ENCODE measurements at regions of chr20 and their contacts with region 1.

Region 1: DNA sequence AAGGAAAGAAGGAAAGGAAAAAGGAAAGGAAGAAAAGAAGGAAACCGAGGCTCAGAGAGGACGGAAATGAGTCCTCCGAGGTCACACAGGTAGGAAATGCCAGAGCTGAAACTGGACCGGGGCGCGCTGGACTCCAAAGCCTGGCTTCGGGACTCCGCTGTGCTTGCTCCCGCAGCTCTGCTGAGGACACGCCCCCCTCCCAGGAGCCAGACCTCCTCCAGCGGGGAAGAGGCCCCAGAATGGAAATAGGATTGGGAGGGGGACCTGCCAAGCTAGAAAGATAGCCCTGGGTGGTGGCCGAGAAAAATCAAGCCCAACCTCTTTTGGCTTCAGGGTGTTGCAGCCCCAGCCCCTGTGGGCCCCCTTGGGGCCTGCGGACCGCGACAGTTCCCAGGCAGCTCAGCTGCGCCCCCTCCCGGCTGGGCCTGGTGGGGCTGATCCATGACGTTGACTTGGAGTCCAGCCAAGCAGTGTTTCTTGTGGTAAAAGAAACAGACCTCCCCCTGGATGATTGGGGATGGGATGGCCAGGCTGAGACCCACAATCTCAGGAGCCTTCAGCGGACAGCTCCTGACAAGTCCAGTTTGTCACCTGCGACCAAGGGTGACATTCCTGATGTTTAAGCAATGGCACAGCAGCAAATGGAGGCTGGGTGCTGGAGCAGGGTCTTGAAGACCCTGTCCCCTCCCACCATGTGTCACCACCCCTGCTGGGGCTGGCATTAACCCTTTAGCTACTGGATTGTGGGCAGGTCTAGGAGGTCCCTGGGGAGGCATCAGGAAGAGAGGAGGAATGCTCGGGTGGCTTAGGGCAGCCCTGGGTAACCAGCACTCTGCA is 55.5 kb downstream of the RIPOR3 start:
- DNase-seq: peak in 1 of 2 experiments; percentile 99
- H3K4me3 ChIP-seq: peak overlapping the region in 1 of 4 experiments; percentile 23; a peak in 1 of 8 replicates
- H3K27ac ChIP-seq: no peak overlapping the region
- H3K4me1 ChIP-seq: peaks cover 15 to 27% (median 18%) of the 10 kb centered on the region in 4 experiments
- H3K27me3 ChIP-seq: no peaks in the 10 kb centered on the region
- CTCF ChIP-seq: peak; percentile 91 to 97 (median 94)
- EP300 ChIP-seq: no peak
- POLR2A ChIP-seq: peak in 1 of 2 experiments; percentile 18; a peak in 1 of 3 replicates
- RAD21 ChIP-seq: peak; percentile 60 to 76

Region 2: DNA sequence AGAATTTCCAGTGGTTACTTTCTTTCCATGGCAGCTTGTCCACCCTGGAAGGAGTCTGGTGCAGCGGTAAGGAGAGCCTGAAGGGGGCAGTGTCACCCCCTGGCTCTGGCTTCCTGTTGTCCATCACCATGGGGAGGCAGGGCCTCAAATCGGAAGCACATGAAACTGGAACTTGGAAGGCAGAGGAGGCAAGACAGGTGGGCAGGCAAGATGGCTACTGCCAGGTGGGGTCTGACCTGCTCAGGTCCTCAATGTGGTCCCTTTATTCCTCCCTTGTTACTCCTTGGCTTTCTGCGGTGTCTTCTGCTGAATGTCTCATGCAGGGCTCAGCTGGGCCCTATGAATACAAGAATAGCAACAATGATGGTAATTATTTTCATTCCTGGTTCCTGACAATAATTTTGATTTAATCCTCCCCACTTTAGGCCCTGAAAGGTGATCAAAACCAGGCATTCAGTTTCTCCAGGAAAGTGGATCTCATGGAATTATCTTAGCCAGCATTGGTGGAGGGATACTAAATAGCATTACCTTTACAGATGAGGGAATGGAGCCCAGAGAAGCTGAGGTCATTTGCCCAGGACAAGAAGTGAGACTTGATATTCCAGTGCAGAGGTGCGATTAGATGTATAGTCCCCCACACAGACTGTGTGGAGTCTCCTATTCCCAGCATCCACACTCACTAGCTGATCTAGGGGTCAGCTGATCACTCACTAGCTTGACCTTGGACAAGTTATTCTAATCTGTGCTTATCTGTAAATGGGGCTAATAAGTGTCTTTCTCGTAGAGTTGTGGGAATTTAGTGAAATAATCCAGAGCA is 670.7 kb before region 1 on chr20:
- CTCF ChIA-PET with region 1: no interaction called
- POLR2A ChIA-PET with region 1: no interaction called
- DNase-seq: peak in 1 of 2 experiments; percentile 84
- H3K4me3 ChIP-seq: no peak overlapping the region
- H3K27ac ChIP-seq: no peak overlapping the region
- H3K4me1 ChIP-seq: peaks cover 0 to 2% (median under 1%) of the 10 kb centered on the region in 4 experiments; a peak in 2 of 7 replicates
- H3K27me3 ChIP-seq: no peaks in the 10 kb centered on the region
- CTCF ChIP-seq: peak; percentile 74 to 92 (median 88)
- EP300 ChIP-seq: no peak
- POLR2A ChIP-seq: no peak
- RAD21 ChIP-seq: peak; percentile 48 to 66

Region 3: DNA sequence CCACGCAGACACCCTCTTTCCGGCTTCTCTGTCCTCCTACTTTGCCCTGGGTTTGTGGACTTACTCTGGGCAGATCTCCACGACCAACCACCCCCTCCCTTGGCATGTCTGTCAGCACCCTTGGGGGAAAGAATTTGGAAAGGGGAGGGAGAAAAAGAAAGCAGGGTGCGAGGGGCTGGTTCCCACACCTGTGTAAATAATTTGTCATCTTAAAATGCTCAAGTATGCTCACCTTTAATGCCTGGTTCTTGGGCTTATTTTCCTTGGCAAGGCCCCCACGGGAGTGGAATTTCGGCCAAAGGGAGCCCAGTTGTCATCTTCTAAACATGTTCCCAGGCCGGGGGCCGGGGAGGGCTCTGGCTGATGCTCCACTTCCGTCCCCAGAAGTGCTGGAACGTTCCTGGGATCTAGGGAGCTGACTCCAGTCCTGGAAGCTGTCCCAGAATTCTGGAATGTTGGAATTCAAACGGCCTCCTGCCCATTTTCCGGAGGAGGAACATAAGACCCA is 323.1 kb before region 1 on chr20:
- CTCF ChIA-PET with region 1: no interaction called
- POLR2A ChIA-PET with region 1: no interaction called
- DNase-seq: no peak
- H3K4me3 ChIP-seq: no peak overlapping the region
- H3K27ac ChIP-seq: no peak overlapping the region
- H3K4me1 ChIP-seq: peaks cover 0 to 7% (median 3%) of the 10 kb centered on the region in 4 experiments; a peak in 4 of 7 replicates
- H3K27me3 ChIP-seq: no peaks in the 10 kb centered on the region
- CTCF ChIP-seq: no peak
- EP300 ChIP-seq: no peak
- POLR2A ChIP-seq: no peak
- RAD21 ChIP-seq: no peak

Region 4: GRCh38 chr20:50510706-50511542 is 125.0 kb before region 1 on chr20:
- CTCF ChIA-PET with region 1: no interaction called
- POLR2A ChIA-PET with region 1: no interaction called
- DNase-seq: no peak
- H3K4me3 ChIP-seq: peak overlapping the region; percentile 81 to 96 (median 89)
- H3K27ac ChIP-seq: peak overlapping the region; percentile 62
- H3K4me1 ChIP-seq: peaks cover 3 to 7% (median 5%) of the 10 kb centered on the region in 4 experiments
- H3K27me3 ChIP-seq: no peaks in the 10 kb centered on the region
- CTCF ChIP-seq: no peak
- EP300 ChIP-seq: no peak
- POLR2A ChIP-seq: no peak; a peak in 1 of 3 replicates
- RAD21 ChIP-seq: no peak

Region 5: GRCh38 chr20:50588034-50588611 is 47.8 kb before region 1 on chr20:
- CTCF ChIA-PET with region 1: interaction called, 18 read pairs
- POLR2A ChIA-PET with region 1: no interaction called
- DNase-seq: peak in 1 of 2 experiments; percentile 99
- H3K4me3 ChIP-seq: no peak overlapping the region
- H3K27ac ChIP-seq: no peak overlapping the region
- H3K4me1 ChIP-seq: no peaks in the 10 kb centered on the region
- H3K27me3 ChIP-seq: no peaks in the 10 kb centered on the region
- CTCF ChIP-seq: peak; percentile 99
- EP300 ChIP-seq: no peak
- POLR2A ChIP-seq: no peak
- RAD21 ChIP-seq: peak; percentile 64 to 75

Region 6: GRCh38 chr20:50690634-50691572 is 55.0 kb after region 1 on chr20 and contains the start of gene RIPOR3:
- CTCF ChIA-PET with region 1: interaction called, 12 read pairs
- POLR2A ChIA-PET with region 1: no interaction called
- DNase-seq: peak in 1 of 2 experiments; percentile 67
- H3K4me3 ChIP-seq: peak within 1 kb of the TSS; percentile 31 to 64 (median 50)
- H3K27ac ChIP-seq: no peak within 1 kb of the TSS
- H3K4me1 ChIP-seq: peaks cover 16 to 24% (median 18%) of the 10 kb centered on the region in 4 experiments
- H3K27me3 ChIP-seq: 0 out of 7 replicates have a peak, but pooled peaks cover 0 to 2% (median 0%) of the 10 kb centered on the region in 4 experiments
- CTCF ChIP-seq: no peak
- EP300 ChIP-seq: no peak
- POLR2A ChIP-seq: no peak
- RAD21 ChIP-seq: no peak
- total RNA-seq, gene RIPOR3: 4.5 and 4.7 TPM in 2 replicates

Region 7: GRCh38 chr20:50756447-50756930 is 120.6 kb after region 1 on chr20:
- CTCF ChIA-PET with region 1: interaction called, 10 read pairs
- POLR2A ChIA-PET with region 1: no interaction called
- DNase-seq: no peak
- H3K4me3 ChIP-seq: no peak overlapping the region
- H3K27ac ChIP-seq: no peak overlapping the region
- H3K4me1 ChIP-seq: peaks cover 0 to under 1% (median 0%) of the 10 kb centered on the region in 4 experiments; a peak in 2 of 7 replicates
- H3K27me3 ChIP-seq: no peaks in the 10 kb centered on the region
- CTCF ChIP-seq: no peak
- EP300 ChIP-seq: no peak
- POLR2A ChIP-seq: no peak
- RAD21 ChIP-seq: no peak